Right lobe of liver (tissue), 6 donors: ENCODE measurements at regions of chr19 and their contacts with region 1.

Region 1: GRCh38 chr19:18112989-18113478 is 15.5 kb downstream of the MAST3 start:
- DNase-seq: peak; percentile 89
- ATAC-seq: peak; percentile 53 to 66 (median 60)
- H3K4me3 ChIP-seq: no peak overlapping the region
- H3K27ac ChIP-seq: no peak overlapping the region
- H3K4me1 ChIP-seq: peaks cover 0 to 28% (median 2%) of the 10 kb centered on the region in 4 donors
- H3K27me3 ChIP-seq: no peaks in the 10 kb centered on the region
- CTCF ChIP-seq: peak; percentile 80 to 95 (median 93)
- POLR2A ChIP-seq: no peak

Region 2: GRCh38 chr19:18074190-18074589 is 38.8 kb before region 1 on chr19:
- intact Hi-C with region 1: no loop called
- DNase-seq: no peak
- ATAC-seq: peak in 2 of 4 donors; percentile 25 to 58
- H3K4me3 ChIP-seq: no peak overlapping the region
- H3K27ac ChIP-seq: no peak overlapping the region
- H3K4me1 ChIP-seq: no peaks in the 10 kb centered on the region
- H3K27me3 ChIP-seq: no peaks in the 10 kb centered on the region
- CTCF ChIP-seq: peak in 1 of 4 donors; percentile 11
- POLR2A ChIP-seq: no peak

Region 3: GRCh38 chr19:18167975-18168645 is 55.1 kb after region 1 on chr19:
- intact Hi-C with region 1: loop called (anchors 5 kb)
- DNase-seq: peak in 1 of 3 donors; percentile 61
- ATAC-seq: peak; percentile 63 to 74 (median 66)
- H3K4me3 ChIP-seq: no peak overlapping the region
- H3K27ac ChIP-seq: no peak overlapping the region
- H3K4me1 ChIP-seq: peaks cover 0 to under 1% (median 0%) of the 10 kb centered on the region in 4 donors
- H3K27me3 ChIP-seq: no peaks in the 10 kb centered on the region
- CTCF ChIP-seq: peak; percentile 63 to 77 (median 68)
- POLR2A ChIP-seq: no peak

Region 4: DNA sequence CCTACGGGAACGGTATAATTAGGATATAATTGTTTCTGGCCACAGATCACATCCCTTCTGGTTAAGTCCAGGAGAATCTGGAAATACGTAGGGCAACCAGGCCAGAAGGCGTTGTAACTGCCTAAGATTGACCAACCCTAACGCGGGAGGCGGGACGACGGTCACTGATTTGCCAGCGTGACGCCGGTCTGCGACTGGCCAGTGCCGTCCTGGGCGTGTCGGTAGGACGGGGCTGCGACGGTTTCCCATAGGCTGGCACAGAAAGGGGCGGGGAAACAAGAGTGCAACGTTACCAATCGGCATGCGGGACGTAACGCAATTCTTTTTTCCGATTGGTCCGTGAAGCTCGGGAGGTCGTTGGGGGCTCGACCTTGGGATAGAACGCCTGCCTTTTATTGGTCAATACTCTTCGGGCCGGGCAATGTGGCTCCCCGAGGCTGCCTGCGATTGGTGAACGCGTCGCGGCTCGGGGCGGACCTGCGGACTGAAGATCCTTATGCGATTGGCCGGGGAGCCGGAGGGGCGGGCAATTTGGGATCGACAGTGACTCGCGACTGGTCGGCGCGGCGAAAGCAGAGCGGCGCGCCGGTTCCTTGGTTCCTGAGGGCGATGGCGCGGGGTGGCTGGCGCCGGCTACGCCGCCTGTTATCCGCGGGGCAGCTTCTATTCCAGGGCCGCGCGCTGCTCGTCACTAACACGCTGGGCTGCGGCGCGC is 79.8 kb after region 1 on chr19 and contains the start of gene MPV17L2:
- intact Hi-C with region 1: no loop called
- DNase-seq: peak; percentile 99 to 100 (median 100)
- ATAC-seq: peak; percentile 88 to 94 (median 92)
- H3K4me3 ChIP-seq: peak within 1 kb of the TSS; percentile 74 to 81 (median 76)
- H3K27ac ChIP-seq: peak within 1 kb of the TSS; percentile 95 to 100 (median 97)
- H3K4me1 ChIP-seq: peaks cover 0 to 8% (median 2%) of the 10 kb centered on the region in 4 donors
- H3K27me3 ChIP-seq: no peaks in the 10 kb centered on the region
- CTCF ChIP-seq: no peak
- POLR2A ChIP-seq: peak; percentile 80
- total RNA-seq, gene MPV17L2: 6.5 to 26.4 (median 7.5) TPM